WTC11 (cell line): ENCODE measurements at regions of chr5 and their contacts with region 1.

Region 1: GRCh38 chr5:141040771-141041426 is 10.3 kb upstream of the PCDHB1 start:
- DNase-seq: peak; percentile 99
- ATAC-seq: peak; percentile 88
- H3K4me3 Mint-ChIP-seq: no peak overlapping the region
- H3K27ac Mint-ChIP-seq: no peak overlapping the region
- H3K4me1 Mint-ChIP-seq: peaks cover 4% of the 10 kb centered on the region
- H3K27me3 Mint-ChIP-seq: peaks cover 8% of the 10 kb centered on the region
- CTCF ChIP-seq: peak; percentile 81

Region 2: GRCh38 chr5:140785905-140786686 is 254.8 kb before region 1 on chr5 and contains the start of gene PCDHA1:
- CTCF ChIA-PET with region 1: interaction called, 17 read pairs
- POLR2A ChIA-PET with region 1: no interaction called
- DNase-seq: peak; percentile 24
- ATAC-seq: peak; percentile 69
- H3K4me3 Mint-ChIP-seq: peak within 1 kb of the TSS; percentile 58
- H3K27ac Mint-ChIP-seq: no peak within 1 kb of the TSS
- H3K4me1 Mint-ChIP-seq: peaks cover 5% of the 10 kb centered on the region; the same call in 1 of the 2 replicates
- H3K27me3 Mint-ChIP-seq: peaks cover 6% of the 10 kb centered on the region
- CTCF ChIP-seq: peak; percentile 49
- total RNA-seq, gene PCDHA1: 2.2 to 2.7 TPM (median 2.4 TPM) in 3 replicates

Region 3: GRCh38 chr5:140840978-140841959 is 199.6 kb before region 1 on chr5 and contains the start of gene PCDHA8:
- CTCF ChIA-PET with region 1: interaction called, 36 read pairs
- POLR2A ChIA-PET with region 1: no interaction called
- DNase-seq: peak; percentile 76
- ATAC-seq: peak; percentile 85
- H3K4me3 Mint-ChIP-seq: peak within 1 kb of the TSS; percentile 49
- H3K27ac Mint-ChIP-seq: no peak within 1 kb of the TSS
- H3K4me1 Mint-ChIP-seq: peaks cover 7% of the 10 kb centered on the region; the same call in 1 of the 2 replicates
- H3K27me3 Mint-ChIP-seq: no peaks in the 10 kb centered on the region; the same call in 1 of the 2 replicates
- CTCF ChIP-seq: peak; percentile 65
- total RNA-seq, gene PCDHA8: 0.85 to 1.3 TPM (median 1.3 TPM) in 3 replicates

Region 4: GRCh38 chr5:140868721-140869554 is 172.0 kb before region 1 on chr5 and contains the start of gene PCDHA11:
- CTCF ChIA-PET with region 1: interaction called, 99 read pairs
- POLR2A ChIA-PET with region 1: interaction called, 13 read pairs
- DNase-seq: no peak
- ATAC-seq: peak; percentile 93
- H3K4me3 Mint-ChIP-seq: peak within 1 kb of the TSS; percentile 88
- H3K27ac Mint-ChIP-seq: peak within 1 kb of the TSS; percentile 78
- H3K4me1 Mint-ChIP-seq: peaks cover 16% of the 10 kb centered on the region
- H3K27me3 Mint-ChIP-seq: no peaks in the 10 kb centered on the region
- CTCF ChIP-seq: no peak
- total RNA-seq, gene PCDHA11: 5.8 to 8.7 TPM (median 7.9 TPM) in 3 replicates

Region 5: GRCh38 chr5:140946578-140946977 is 94.3 kb before region 1 on chr5:
- CTCF ChIA-PET with region 1: interaction called, 10 read pairs
- POLR2A ChIA-PET with region 1: no interaction called
- DNase-seq: no peak
- ATAC-seq: no peak
- H3K4me3 Mint-ChIP-seq: no peak overlapping the region
- H3K27ac Mint-ChIP-seq: no peak overlapping the region
- H3K4me1 Mint-ChIP-seq: no peaks in the 10 kb centered on the region
- H3K27me3 Mint-ChIP-seq: no peaks in the 10 kb centered on the region
- CTCF ChIP-seq: no peak

Region 6: GRCh38 chr5:140986117-140986521 is 54.8 kb before region 1 on chr5:
- CTCF ChIA-PET with region 1: interaction called, 15 read pairs
- POLR2A ChIA-PET with region 1: interaction called, 4 read pairs
- DNase-seq: no peak
- ATAC-seq: peak; percentile 89
- H3K4me3 Mint-ChIP-seq: peak overlapping the region; percentile 31
- H3K27ac Mint-ChIP-seq: peak overlapping the region; percentile 98
- H3K4me1 Mint-ChIP-seq: peaks cover 56% of the 10 kb centered on the region
- H3K27me3 Mint-ChIP-seq: no peaks in the 10 kb centered on the region
- CTCF ChIP-seq: no peak

Region 7: DNA sequence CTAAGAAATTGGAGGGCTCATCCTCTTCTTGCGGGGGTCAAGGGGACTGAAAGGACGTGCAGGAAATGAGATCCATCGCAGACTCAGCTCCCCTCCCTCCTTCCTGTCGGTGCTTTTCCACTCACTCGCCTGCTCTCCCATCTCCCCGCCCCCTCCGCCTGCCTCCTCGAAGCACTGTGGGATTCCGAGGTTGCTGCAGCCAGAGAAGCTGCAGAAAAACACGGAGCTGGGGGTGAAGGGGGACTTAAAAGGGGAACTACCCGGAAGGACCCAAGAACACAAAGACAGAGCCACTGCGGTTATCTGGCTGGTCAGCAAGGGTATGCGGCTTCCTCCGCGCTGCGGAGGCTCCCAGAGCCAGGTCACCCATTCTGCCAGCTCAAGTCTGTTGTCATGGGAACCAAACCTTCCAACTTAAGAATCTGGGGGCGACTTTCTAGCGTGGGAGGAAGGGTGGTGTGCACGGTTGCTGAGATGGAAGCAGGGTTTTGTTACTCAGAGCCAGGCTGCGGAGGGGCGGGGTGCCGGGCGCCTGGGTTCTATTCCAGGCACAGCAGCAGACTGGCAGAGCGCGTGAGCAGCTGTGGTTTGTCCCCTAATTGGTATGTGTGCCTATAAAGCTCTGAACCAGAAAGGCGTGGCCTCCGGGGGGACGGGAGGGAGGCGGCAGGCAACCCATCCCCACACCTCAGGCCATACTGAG is 472.9 kb after region 1 on chr5:
- CTCF ChIA-PET with region 1: no interaction called
- POLR2A ChIA-PET with region 1: no interaction called
- DNase-seq: peak; percentile 69
- ATAC-seq: peak; percentile 38
- H3K4me3 Mint-ChIP-seq: peak overlapping the region; percentile 87
- H3K27ac Mint-ChIP-seq: peak overlapping the region; percentile 94
- H3K4me1 Mint-ChIP-seq: peaks cover 49% of the 10 kb centered on the region
- H3K27me3 Mint-ChIP-seq: no peaks in the 10 kb centered on the region
- CTCF ChIP-seq: no peak